Heart left ventricle (tissue), 16 donors: ENCODE measurements at regions of chr10 and their contacts with region 1.

Region 1: DNA sequence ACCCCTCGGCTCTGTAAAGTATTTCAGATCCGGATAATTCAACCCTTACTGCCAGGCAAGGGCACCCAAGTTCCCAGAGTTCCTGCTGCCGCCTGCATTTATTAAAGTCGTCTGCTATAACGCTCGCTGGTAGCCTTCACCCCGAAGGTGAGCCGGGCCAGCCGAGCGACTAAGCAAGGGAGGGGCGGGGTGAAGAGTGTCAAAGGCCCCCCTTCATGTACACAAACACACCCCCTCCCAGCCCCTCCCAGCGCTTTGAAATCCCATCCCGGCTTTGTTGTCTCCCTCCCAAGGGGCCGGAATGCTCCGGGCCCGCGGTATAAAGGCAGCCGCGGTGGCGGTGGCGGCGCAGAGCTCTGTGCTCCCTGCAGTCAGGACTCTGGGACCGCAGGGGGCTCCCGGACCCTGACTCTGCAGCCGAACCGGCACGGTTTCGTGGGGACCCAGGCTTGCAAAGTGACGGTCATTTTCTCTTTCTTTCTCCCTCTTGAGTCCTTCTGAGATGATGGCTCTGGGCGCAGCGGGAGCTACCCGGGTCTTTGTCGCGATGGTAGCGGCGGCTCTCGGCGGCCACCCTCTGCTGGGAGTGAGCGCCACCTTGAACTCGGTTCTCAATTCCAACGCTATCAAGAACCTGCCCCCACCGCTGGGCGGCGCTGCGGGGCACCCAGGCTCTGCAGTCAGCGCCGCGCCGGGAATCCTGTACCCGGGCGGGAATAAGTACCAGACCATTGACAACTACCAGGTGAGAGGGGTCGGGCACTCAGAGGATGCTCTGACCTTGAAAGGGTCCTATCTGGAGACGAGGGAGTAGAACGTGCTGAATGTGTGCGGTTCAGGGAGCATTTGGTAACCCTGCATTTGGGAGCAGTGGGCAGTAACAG is at the start of gene DKK1:
- DNase-seq: peak; percentile 33 to 73 (median 46)
- ATAC-seq: peak; percentile 41 to 88 (median 84)
- H3K4me3 ChIP-seq: peak within 1 kb of the TSS; percentile 22 to 70 (median 56)
- H3K27ac ChIP-seq: no peak within 1 kb of the TSS
- H3K4me1 ChIP-seq: peaks cover 0 to 25% (median 4%) of the 10 kb centered on the region in 12 donors
- H3K27me3 ChIP-seq: peaks cover 0 to 37% (median 6%) of the 10 kb centered on the region in 9 donors
- CTCF ChIP-seq: peak; percentile 40 to 66 (median 56)
- POLR2A ChIP-seq: no peak
- total RNA-seq, gene DKK1: 0.42 to 1.5 (median 0.62) TPM in 5 of 9 donors, not detected in the others

Region 2: GRCh38 chr10:52334595-52334994 is 20.4 kb after region 1 on chr10:
- intact Hi-C with region 1: no loop called
- DNase-seq: no peak
- ATAC-seq: no peak
- H3K4me3 ChIP-seq: no peak overlapping the region
- H3K27ac ChIP-seq: no peak overlapping the region
- H3K4me1 ChIP-seq: no peaks in the 10 kb centered on the region
- H3K27me3 ChIP-seq: peaks cover 0 to 5% (median 0%) of the 10 kb centered on the region in 9 donors
- CTCF ChIP-seq: no peak
- POLR2A ChIP-seq: no peak

Region 3: GRCh38 chr10:52597189-52597863 is 283.2 kb after region 1 on chr10:
- intact Hi-C with region 1: loop called in 1 of 10 experiments (anchors 10 kb)
- DNase-seq: no peak
- ATAC-seq: no peak
- H3K4me3 ChIP-seq: no peak overlapping the region
- H3K27ac ChIP-seq: no peak overlapping the region
- H3K4me1 ChIP-seq: no peaks in the 10 kb centered on the region
- H3K27me3 ChIP-seq: no peaks in the 10 kb centered on the region
- CTCF ChIP-seq: no peak
- POLR2A ChIP-seq: no peak

Region 4: DNA sequence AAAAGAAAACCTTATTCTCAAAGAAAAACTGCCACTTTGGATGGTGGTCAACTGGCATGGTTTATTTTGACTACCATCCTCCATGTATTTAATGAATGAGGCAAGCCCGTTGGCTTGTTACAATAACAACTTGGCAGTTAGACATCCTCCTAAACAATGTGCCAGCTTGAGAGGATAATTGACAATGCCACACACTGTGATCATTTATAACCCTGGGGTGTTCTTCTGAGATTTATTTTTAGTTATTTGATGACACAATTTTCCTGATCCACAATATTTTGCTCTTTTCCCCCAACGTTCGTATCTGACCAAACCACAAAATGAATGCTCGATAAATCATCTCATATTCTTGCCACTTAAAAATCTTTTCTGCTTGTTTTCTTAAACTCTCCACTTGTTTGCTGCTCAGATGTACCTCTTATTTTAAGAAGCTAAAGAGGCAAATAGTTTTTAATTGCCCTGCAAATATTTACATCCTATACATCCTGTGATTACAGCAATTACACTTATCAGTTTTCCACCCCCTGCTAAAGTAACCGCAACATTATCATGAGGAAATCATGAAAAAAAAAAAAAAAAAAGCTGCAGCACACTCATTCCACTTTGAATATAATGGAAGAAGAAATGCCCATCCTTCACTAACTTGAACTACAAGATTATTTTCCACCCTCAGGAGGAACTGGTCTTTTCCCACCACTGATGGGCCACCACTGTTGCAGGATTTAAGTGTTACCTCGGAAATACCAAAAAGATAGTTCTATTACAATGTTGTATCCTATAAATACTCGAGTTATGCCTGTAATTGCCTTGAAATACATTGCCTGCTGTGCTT is 338.5 kb after region 1 on chr10:
- intact Hi-C with region 1: loop called in 2 of 10 experiments (anchors 5 kb)
- DNase-seq: no peak
- ATAC-seq: peak; percentile 50 to 71 (median 63)
- H3K4me3 ChIP-seq: peak overlapping the region in 1 of 12 donors; percentile 11
- H3K27ac ChIP-seq: peak overlapping the region in 10 of 12 donors; percentile 4 to 75 (median 41)
- H3K4me1 ChIP-seq: peaks cover 0 to 10% (median 0%) of the 10 kb centered on the region in 12 donors
- H3K27me3 ChIP-seq: no peaks in the 10 kb centered on the region
- CTCF ChIP-seq: no peak
- POLR2A ChIP-seq: no peak